Ascending aorta (tissue), 2 donors: ENCODE measurements at regions of chr16 and their contacts with region 1.

Region 1: DNA sequence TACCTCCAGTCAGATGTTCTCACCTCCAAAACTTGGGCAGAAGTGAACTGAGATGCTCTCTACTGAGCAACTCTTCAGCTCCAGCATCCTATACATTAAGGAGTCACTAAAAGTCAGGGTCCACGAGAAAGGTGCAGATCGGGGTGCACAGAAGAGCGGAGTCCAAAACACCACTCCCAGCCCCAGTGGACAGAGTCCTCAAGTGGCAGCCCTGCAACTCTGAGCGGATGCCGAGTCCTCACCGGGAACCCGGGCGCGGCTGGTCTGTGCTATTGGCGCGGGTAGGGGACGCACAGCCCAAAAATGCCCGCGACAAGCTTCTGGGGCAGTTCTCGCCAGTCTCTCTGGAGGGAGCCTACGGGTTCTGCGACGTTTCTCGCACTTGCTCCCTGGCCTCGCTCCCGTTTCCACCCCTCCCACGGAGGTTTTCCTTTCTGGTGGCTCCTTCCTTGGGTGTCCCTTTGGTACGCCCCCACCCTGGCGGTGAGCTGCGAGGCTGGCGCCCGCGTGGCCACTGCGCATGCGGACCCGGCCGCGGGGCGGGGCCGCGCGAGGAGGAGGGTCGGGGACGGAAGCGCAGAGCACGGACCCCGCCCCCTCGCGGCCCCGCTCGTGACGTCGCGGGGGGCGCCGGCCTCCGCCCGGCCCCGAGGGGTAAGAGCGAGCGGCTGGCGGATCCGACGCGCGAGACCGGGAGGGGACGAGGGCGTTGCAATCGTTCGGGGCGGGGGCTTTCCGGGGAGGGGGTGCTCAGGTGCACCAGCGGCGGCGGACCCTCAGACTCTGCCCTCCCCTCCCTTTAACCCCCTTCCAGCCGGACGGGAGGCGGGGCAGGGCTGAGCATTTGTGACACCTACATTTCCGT is at the start of gene TMEM219:
- DNase-seq: peak; percentile 73 to 97
- H3K4me3 ChIP-seq: peak within 1 kb of the TSS; percentile 71 to 75
- H3K27ac ChIP-seq: peak within 1 kb of the TSS; percentile 85 to 94
- H3K4me1 ChIP-seq: peaks cover 0 to 5% of the 10 kb centered on the region in 2 donors
- H3K27me3 ChIP-seq: no peaks in the 10 kb centered on the region
- CTCF ChIP-seq: peak; percentile 37 to 80 (median 42)
- total RNA-seq, gene TMEM219: 49.2 TPM

Region 2: GRCh38 chr16:28478506-28479200 is 1483.1 kb before region 1 on chr16:
- intact Hi-C with region 1: no loop called
- DNase-seq: peak in 1 of 2 donors; percentile 24
- H3K4me3 ChIP-seq: no peak overlapping the region
- H3K27ac ChIP-seq: no peak overlapping the region
- H3K4me1 ChIP-seq: no peaks in the 10 kb centered on the region
- H3K27me3 ChIP-seq: no peaks in the 10 kb centered on the region
- CTCF ChIP-seq: no peak

Region 3: GRCh38 chr16:29973384-29974246 is 11.9 kb after region 1 on chr16 and contains the start of gene TAOK2:
- intact Hi-C with region 1: loop called (anchors 1 kb)
- DNase-seq: peak; percentile 94 to 99
- H3K4me3 ChIP-seq: peak within 1 kb of the TSS; percentile 80 to 93
- H3K27ac ChIP-seq: peak within 1 kb of the TSS; percentile 85 to 90
- H3K4me1 ChIP-seq: peaks cover 12 to 24% of the 10 kb centered on the region in 2 donors
- H3K27me3 ChIP-seq: no peaks in the 10 kb centered on the region
- CTCF ChIP-seq: no peak
- total RNA-seq, gene TAOK2: 101 TPM